H1 (cell line): ENCODE measurements at regions of chr6 and their contacts with region 1.

Region 1: GRCh38 chr6:159110013-159110412 is 59.2 kb upstream of the FNDC1 start:
- DNase-seq: peak in 1 of 2 experiments; percentile 73
- H3K4me3 ChIP-seq: no peak overlapping the region
- H3K27ac ChIP-seq: no peak overlapping the region
- H3K4me1 ChIP-seq: peaks cover 0 to 3% (median under 1%) of the 10 kb centered on the region in 4 experiments; a peak in 2 of 7 replicates
- H3K27me3 ChIP-seq: no peaks in the 10 kb centered on the region
- CTCF ChIP-seq: peak; percentile 56 to 90 (median 80)
- EP300 ChIP-seq: no peak
- POLR2A ChIP-seq: no peak
- RAD21 ChIP-seq: peak; percentile 84 to 88

Region 2: DNA sequence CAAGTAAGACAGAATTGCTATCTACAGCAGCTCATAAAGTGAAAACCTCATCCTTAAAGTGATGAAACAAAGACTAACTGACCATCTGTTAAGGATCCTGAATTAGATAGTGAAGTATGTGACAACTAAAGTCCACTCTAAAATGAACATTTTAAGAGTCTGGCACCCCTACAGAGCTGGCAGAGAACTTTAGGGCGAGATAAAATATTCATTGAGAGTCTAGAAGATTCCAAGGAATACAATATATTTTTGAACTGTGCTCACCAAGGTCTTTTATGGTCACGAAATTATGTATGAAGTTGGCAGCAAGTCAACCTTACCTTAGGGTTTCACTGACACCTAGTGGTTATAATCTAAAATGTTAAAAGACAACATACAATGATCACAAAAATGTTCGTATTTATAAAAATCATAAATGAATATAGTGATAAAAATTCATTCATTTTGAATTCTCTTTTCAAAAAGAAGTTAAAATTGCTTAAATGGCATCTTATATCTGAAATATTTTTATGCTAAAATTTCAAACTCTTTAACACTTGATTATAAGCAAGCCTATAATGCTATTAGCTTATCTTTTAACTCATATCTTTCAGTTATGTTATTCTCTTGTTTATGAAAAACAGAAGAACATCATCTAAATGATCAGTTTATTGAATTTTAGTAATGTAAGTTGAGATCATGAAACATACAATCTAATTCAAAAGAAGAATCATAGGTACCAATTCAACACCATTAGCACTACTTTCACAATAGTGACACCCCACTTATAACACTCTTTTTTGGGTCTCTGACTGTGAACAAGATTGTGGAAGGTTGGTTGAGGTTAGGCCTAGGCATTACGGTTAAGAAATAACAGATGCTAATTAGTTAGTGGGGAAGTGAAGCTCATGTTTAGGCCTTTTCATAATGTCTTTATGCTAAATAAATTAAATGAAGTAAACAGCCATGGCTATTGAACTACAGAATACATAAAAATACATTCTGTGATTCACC is 137.5 kb before region 1 on chr6:
- CTCF ChIA-PET with region 1: no interaction called
- POLR2A ChIA-PET with region 1: no interaction called
- DNase-seq: no peak
- H3K4me3 ChIP-seq: no peak overlapping the region
- H3K27ac ChIP-seq: no peak overlapping the region
- H3K4me1 ChIP-seq: no peaks in the 10 kb centered on the region
- H3K27me3 ChIP-seq: no peaks in the 10 kb centered on the region
- CTCF ChIP-seq: peak in 2 of 3 experiments; percentile 20 to 36; a peak in 2 of 4 replicates
- EP300 ChIP-seq: no peak
- POLR2A ChIP-seq: no peak
- RAD21 ChIP-seq: peak; percentile 84 to 91

Region 3: GRCh38 chr6:159008656-159009288 is 101.2 kb before region 1 on chr6:
- CTCF ChIA-PET with region 1: interaction called, 106 read pairs
- POLR2A ChIA-PET with region 1: interaction called, 4 read pairs
- DNase-seq: no peak
- H3K4me3 ChIP-seq: no peak overlapping the region
- H3K27ac ChIP-seq: no peak overlapping the region
- H3K4me1 ChIP-seq: no peaks in the 10 kb centered on the region
- H3K27me3 ChIP-seq: no peaks in the 10 kb centered on the region
- CTCF ChIP-seq: peak in 2 of 3 experiments; percentile 15 to 43; a peak in 2 of 4 replicates
- EP300 ChIP-seq: no peak
- POLR2A ChIP-seq: no peak
- RAD21 ChIP-seq: peak; percentile 48 to 51

Region 4: DNA sequence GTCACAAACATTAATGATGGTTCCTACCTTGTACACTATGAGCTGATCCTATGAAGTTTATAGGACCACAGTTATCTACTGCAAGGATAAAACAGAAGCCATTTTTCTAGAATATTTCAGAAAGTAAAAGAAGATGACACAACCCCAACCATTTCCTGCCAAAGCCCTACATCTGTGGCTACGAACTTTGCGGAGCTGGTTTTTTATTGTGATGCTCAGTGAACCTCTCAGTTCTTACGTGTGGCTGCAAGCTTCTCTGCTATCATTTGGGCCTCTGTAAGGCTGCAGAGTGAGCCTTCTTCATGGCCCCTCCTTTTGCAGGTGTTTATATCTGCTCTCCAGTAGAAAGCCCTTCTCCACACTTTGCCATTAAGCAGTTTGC is 47.5 kb before region 1 on chr6:
- CTCF ChIA-PET with region 1: interaction called, 10 read pairs
- POLR2A ChIA-PET with region 1: no interaction called
- DNase-seq: no peak
- H3K4me3 ChIP-seq: no peak overlapping the region
- H3K27ac ChIP-seq: no peak overlapping the region
- H3K4me1 ChIP-seq: no peaks in the 10 kb centered on the region
- H3K27me3 ChIP-seq: no peaks in the 10 kb centered on the region
- CTCF ChIP-seq: no peak
- EP300 ChIP-seq: no peak
- POLR2A ChIP-seq: no peak
- RAD21 ChIP-seq: no peak

Region 5: DNA sequence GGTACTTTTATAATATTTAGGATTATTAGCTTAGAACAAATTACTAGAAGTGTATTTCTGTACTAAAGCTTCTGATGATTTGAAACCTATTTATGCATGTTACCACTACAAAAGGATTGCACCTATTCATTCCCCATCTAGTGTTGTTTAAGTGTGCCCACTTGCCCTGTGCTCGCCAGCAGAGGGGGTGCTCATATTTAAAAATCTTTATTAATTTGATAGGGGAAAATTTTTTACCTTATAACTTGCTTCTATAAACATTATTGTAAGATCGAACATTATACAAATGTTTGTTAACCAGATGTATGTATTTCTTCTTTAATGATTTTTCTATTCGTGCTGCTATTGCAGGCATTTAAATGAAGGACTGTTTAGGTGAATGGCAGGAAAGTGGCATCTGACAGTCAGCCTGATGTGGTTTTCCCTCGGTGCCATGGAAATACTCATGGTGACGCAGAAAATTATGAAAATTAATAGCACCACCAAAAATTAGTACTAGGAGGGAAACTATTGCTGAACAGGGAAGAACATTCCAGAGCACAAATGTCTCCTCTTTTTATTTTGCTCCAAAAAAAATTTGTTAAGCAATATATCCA is 15.1 kb after region 1 on chr6:
- CTCF ChIA-PET with region 1: interaction called, 25 read pairs
- POLR2A ChIA-PET with region 1: interaction called, 4 read pairs
- DNase-seq: no peak
- H3K4me3 ChIP-seq: no peak overlapping the region
- H3K27ac ChIP-seq: no peak overlapping the region
- H3K4me1 ChIP-seq: no peaks in the 10 kb centered on the region
- H3K27me3 ChIP-seq: no peaks in the 10 kb centered on the region; a peak in 1 of 7 replicates
- CTCF ChIP-seq: peak in 2 of 3 experiments; percentile 2 to 6; a peak in 2 of 4 replicates
- EP300 ChIP-seq: no peak
- POLR2A ChIP-seq: no peak
- RAD21 ChIP-seq: no peak

Region 6: GRCh38 chr6:159161839-159162238 is 51.8 kb after region 1 on chr6:
- CTCF ChIA-PET with region 1: no interaction called
- POLR2A ChIA-PET with region 1: no interaction called
- DNase-seq: no peak
- H3K4me3 ChIP-seq: no peak overlapping the region
- H3K27ac ChIP-seq: no peak overlapping the region
- H3K4me1 ChIP-seq: no peaks in the 10 kb centered on the region
- H3K27me3 ChIP-seq: peaks cover 0 to 11% (median 5%) of the 10 kb centered on the region in 4 experiments; a peak in 5 of 7 replicates
- CTCF ChIP-seq: no peak
- EP300 ChIP-seq: no peak
- POLR2A ChIP-seq: no peak
- RAD21 ChIP-seq: no peak